ENCODE measurements at regions of chr22 and their contacts with region 1.

Region 1: DNA sequence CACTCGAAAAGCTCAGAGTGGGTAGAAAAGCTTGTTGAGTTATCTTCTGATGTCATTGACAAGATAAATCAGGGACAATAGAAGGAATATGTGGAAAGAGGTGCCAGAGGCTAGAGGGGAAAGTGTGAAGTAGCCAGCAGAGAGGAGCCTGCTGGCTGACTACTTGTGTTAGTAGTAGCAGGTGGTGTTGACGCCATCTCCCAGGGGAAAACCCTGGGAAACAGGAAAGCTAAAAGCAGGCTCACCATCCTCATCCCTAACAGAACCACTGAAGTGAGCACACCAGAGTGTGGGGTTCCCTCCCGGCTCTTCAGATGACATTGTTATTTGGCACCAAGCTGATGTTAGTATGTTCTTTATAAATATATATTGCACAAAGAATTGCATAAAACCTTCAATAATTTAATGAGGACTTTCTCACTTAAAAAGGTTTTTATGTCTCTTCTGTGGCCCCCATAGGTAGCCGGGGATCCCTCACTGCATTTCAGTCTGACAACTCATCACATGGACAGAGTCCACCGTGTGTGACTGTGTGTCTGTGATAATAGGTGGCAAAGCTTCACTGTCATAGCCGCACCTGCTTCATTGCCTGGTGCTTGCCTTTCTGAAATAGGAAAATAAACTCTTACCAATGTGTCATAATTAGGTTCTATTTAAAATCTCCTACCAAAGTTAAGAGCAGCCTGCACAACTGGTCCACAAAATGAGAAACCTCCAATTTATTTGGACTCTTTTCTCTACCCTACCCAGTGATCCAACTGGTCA is 63.2 kb upstream of the TOP3B start:
- DNase-seq: no peak
- H3K4me3 ChIP-seq: no peak overlapping the region
- H3K27ac ChIP-seq: no peak overlapping the region
- H3K4me1 ChIP-seq: no peaks in the 10 kb centered on the region
- H3K27me3 ChIP-seq: peaks cover 9% of the 10 kb centered on the region
- CTCF ChIP-seq: no peak

Region 2: GRCh38 chr22:22410677-22411076 is 364.9 kb after region 1 on chr22:
- CTCF ChIA-PET with region 1: no interaction called
- POLR2A ChIA-PET with region 1: interaction called, 12 read pairs
- intact Hi-C with region 1: no loop called
- DNase-seq: no peak
- H3K4me3 ChIP-seq: no peak overlapping the region
- H3K27ac ChIP-seq: no peak overlapping the region
- H3K4me1 ChIP-seq: no peaks in the 10 kb centered on the region
- H3K27me3 ChIP-seq: peaks cover 84% of the 10 kb centered on the region
- CTCF ChIP-seq: no peak

Measured in A673 (cell line).